ENCODE measurements at regions of chr1 and their contacts with region 1.

Region 1: DNA sequence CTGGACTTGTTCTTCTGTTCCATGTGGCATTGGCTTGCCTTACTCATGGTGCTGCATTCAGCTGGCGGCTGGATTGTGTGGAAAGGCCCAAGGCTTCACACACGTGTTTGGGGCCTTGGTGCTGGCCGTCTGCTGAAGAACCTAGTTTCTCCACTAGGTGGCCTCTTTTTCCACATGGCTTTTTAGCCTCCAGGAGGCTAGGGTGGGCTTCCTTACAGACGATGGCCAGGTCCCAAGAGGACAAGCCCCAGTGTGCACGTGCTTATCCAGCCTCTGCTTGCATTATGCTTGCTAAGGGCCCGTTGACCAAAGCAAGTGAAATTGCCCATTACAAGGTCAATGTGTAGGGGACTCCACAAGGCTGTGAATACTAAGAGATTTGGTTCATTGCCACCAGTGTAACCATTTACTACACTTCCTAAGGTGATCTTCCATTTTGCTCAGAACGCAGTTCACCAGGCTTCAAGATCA is 47.5 kb upstream of the FOXO6 start:
- DNase-seq: peak; percentile 30
- H3K4me3 ChIP-seq: no peak overlapping the region
- H3K27ac ChIP-seq: no peak overlapping the region
- H3K4me1 ChIP-seq: no peaks in the 10 kb centered on the region
- H3K27me3 ChIP-seq: peaks cover 0 to 14% of the 10 kb centered on the region in 2 experiments
- CTCF ChIP-seq: peak; percentile 61 to 72
- POLR2A ChIP-seq: no peak

Region 2: DNA sequence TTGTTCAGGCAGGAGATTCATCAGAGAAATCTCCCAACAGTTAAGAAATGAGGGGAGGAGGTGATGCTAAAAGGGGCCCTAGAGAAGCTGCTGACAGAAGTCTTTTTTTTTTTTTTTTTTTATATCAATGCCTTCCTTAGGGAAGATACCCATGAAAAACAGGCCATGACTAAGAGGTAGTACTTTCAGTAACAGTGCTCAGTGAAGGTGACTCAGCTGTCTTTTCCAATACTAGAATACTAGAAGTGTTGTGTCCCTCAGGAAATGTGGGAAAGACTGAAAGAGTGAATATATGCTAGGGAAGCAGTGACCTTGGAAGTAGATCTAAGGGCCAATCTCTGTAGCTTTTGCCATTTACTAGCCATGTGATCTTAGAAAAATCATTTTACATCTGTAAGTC is 239.7 kb before region 1 on chr1:
- CTCF ChIA-PET with region 1: no interaction called
- POLR2A ChIA-PET with region 1: no interaction called
- dilution Hi-C with region 1: no loop called
- intact Hi-C with region 1: no loop called
- DNase-seq: peak; percentile 39
- H3K4me3 ChIP-seq: no peak overlapping the region
- H3K27ac ChIP-seq: no peak overlapping the region
- H3K4me1 ChIP-seq: peaks cover 4% of the 10 kb centered on the region
- H3K27me3 ChIP-seq: no peaks in the 10 kb centered on the region
- CTCF ChIP-seq: no peak
- POLR2A ChIP-seq: no peak

Region 3: DNA sequence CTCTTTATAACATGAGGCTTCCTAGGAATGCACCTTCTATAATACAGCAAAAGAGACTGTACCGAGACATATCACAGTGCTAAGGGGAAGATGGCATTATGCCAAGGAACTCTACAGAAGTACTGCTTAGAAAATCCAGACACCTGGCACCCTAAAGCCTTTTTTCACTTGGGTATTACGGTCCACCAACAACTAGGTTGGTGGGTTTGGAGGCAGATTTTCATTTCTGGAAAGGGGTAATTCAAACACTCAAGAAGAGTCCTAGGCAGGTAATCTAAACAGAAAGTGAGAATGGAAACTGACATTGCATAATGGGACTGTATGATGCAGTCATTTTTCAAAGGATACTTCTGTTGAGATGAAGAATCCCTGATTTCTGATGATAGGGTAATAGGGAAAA is 91.2 kb before region 1 on chr1:
- CTCF ChIA-PET with region 1: no interaction called
- POLR2A ChIA-PET with region 1: no interaction called
- dilution Hi-C with region 1: no loop called
- intact Hi-C with region 1: no loop called
- DNase-seq: peak; percentile 22
- H3K4me3 ChIP-seq: no peak overlapping the region
- H3K27ac ChIP-seq: no peak overlapping the region
- H3K4me1 ChIP-seq: no peaks in the 10 kb centered on the region
- H3K27me3 ChIP-seq: no peaks in the 10 kb centered on the region
- CTCF ChIP-seq: no peak
- POLR2A ChIP-seq: no peak

Region 4: DNA sequence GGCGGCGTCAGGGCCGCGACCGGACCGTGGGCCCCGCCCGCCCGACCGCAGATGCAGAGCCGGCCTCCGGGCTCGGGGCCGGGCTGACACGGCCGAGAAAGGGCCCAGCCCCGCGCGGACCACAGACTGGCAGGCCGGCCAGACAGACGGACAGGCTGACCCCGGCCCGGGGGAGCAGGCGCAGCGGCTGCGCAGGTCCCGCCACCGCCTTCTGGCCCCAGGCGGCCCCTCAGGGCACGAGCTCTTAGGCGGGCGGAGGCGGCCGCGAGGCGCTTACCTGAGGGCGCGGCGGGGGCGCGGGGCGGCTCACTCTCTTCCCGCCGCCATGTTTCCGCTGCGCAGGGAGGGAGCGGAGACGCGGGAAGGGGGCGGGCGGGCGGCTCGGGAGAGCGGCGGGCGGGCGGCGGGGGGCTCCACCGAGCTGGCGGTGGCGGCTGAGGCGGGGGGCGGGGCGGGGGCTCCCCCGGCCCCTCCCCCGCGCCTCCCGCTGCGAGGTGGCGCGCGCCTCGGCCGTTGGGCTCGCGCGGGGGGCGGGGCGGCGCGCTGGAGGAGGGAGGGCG is 71.8 kb before region 1 on chr1 and contains the start of gene SCMH1:
- CTCF ChIA-PET with region 1: no interaction called
- POLR2A ChIA-PET with region 1: no interaction called
- dilution Hi-C with region 1: no loop called
- intact Hi-C with region 1: no loop called
- DNase-seq: peak; percentile 46
- H3K4me3 ChIP-seq: peak within 1 kb of the TSS; percentile 66 to 67 (median 67)
- H3K27ac ChIP-seq: peak within 1 kb of the TSS; percentile 68
- H3K4me1 ChIP-seq: peaks cover 42% of the 10 kb centered on the region
- H3K27me3 ChIP-seq: no peaks in the 10 kb centered on the region
- CTCF ChIP-seq: no peak
- POLR2A ChIP-seq: no peak
- total RNA-seq, gene SCMH1: 39.9 and 40.0 TPM in 2 replicates

Region 5: GRCh38 chr1:41268154-41268770 is 45.4 kb before region 1 on chr1:
- CTCF ChIA-PET with region 1: interaction called, 3 read pairs
- POLR2A ChIA-PET with region 1: no interaction called
- dilution Hi-C with region 1: no loop called
- intact Hi-C with region 1: loop called (anchors 1 kb)
- DNase-seq: peak; percentile 68
- H3K4me3 ChIP-seq: no peak overlapping the region
- H3K27ac ChIP-seq: no peak overlapping the region
- H3K4me1 ChIP-seq: no peaks in the 10 kb centered on the region
- H3K27me3 ChIP-seq: peaks cover 0 to 9% of the 10 kb centered on the region in 2 experiments
- CTCF ChIP-seq: peak; percentile 95 to 97
- POLR2A ChIP-seq: no peak